ENCODE measurements at regions of chr1 and their contacts with region 1.

Region 1: DNA sequence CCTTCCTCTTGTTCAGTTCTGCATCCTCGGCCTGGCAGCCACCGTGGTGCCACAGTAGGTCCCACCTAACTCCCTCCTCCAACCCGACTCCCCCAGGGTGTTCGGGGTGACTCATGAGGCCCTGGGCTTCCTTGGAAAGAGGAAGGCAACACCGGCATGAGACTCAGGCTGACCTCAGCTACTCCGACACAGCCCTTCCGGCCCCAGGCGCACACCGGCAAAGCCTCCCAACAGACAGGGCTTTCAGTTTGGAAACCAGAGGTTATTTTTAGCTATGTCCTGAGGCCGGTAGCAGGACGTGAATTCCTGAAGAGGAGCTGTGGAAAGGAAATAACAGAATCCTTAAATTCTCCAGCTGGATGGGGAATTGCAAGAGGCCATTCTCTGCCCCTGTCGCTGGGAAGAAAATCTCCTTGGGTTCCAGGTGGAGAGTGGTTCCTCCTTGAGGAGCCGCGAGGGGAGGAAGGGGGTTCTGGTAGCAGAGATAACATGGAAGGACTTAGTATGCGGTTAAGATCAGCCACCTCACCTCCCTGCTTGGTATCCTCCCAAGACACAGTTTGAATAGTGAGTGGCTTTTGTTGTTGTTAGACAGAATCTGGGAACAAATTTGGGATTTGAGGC is 24.4 kb downstream of the PLXNA2 start:
- DNase-seq: peak; percentile 87

Region 2: DNA sequence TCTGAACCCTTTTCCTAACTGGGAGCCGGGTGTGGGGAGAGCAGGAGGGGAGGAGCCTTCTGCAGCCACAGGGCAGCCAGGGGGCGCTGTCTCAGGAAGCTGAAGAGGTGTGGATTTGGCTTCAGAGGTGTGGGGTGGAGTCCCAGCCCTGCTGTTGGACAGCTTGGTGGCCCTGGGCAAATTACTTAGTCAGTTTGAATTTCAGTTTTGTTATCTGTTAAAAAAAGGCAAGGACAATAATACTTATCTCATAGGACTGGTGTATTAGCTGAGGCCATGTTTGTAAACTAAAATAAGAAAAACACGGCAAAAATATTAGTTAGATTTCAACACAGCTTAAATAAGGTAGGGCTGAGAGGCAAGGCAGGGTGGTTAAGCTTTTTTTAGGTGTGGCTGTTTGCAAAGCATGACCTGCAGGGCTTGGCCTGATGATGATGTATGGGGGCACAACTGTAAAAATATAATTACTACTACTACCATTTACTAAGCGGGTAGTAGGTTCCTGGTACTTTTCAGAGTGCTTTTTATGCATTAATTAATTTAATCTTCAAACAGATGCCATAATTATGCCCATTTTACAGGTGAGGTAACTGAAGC is 87.4 kb before region 1 on chr1:
- intact Hi-C with region 1: loop called in 1 of 2 experiments (anchors 10 kb)
- DNase-seq: peak; percentile 85

Region 3: DNA sequence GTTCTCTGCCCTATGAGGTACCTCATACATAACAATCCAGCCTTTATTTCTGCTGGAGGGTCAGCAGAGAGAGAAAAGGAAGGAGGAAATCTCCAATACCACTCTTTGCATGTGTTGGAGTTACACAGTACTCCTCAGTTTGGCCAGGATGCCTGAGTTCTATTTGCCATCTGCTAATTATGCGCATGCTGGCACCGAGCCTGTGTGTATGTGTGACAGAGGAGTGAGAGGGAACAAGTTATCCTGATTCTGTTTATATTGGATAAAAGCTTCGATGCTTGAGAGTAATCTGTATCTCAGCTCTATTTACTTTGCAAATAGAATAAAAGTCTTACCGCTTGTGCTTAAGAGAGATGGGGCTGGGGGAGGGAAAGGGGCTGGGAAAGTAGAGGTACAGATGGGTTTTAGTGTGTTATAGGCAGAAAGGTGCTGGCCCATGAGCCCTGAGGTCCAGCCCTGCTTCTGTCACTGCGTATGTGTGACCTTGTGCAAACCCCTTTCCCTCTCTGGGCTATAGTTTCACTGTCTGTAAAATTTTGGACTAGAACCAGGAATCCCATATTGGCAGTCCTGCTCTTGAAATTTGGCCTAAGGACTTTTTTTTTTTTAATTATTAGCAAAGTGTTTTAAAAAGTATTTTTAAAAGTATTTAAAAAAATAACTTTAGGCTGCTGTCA is 79.0 kb after region 1 on chr1:
- intact Hi-C with region 1: no loop called
- DNase-seq: no peak